ENCODE measurements at regions of chr2 and their contacts with region 1.

Region 1: DNA sequence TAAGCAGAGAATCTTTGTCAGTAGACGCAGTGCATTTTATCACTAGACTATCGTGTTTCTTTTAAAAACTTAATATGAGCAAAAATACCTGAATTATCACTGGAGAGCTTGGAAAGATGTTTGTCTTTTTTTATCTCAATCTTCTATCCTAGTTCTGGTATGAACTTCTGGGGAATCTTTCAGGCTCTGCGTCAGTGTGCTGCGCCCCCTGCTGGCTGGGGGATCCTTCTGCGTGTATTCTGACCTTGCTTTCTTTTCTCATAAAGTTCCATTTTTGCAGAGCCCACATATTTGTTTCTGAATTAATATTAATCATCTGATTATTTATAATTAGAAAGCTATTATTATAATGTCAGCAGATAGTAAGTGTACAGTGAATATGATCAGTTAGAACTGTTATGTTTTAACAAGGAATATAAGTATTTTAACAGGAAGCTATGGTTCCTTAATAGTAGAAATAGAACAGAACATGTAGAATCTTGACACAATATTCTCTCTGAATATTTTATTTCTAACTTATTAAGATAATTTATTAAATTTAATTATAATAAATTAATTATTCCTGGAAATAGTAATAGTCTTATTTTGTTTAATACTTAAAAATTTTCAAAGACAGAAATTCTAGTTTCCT is 945.0 kb upstream of the CRIM1 start:
- DNase-seq: no peak
- H3K4me3 ChIP-seq: no peak overlapping the region
- H3K27ac ChIP-seq: no peak overlapping the region
- H3K4me1 ChIP-seq: peaks cover 0 to 6% (median 0%) of the 10 kb centered on the region in 4 donors
- H3K27me3 ChIP-seq: no peaks in the 10 kb centered on the region
- CTCF ChIP-seq: peak; percentile 70 to 94 (median 92)
- EP300 ChIP-seq: no peak
- POLR2A ChIP-seq: no peak

Region 2: DNA sequence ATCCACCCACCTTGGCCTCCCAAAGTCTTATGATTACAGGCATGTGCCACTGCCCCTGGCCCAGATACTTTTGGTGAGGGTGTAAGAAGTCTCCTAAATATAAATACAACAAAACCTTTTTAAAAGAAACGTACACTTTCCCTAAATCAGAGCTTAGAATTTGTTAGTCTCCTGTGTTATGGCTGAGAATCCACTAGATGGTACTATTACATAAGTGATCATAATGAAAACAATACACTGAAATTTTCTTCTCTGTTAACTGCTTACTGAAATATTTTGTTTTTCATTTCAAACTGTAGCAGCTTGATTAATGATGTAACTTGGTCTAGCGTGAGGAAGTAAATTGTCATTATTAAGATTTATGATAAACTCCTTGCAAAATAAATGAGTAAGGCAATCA is 1736.6 kb before region 1 on chr2:
- intact Hi-C with region 1: loop called (anchors 10 kb)
- DNase-seq: no peak
- H3K4me3 ChIP-seq: no peak overlapping the region
- H3K27ac ChIP-seq: no peak overlapping the region
- H3K4me1 ChIP-seq: no peaks in the 10 kb centered on the region
- H3K27me3 ChIP-seq: no peaks in the 10 kb centered on the region
- CTCF ChIP-seq: peak; percentile 40 to 58 (median 47)
- EP300 ChIP-seq: no peak
- POLR2A ChIP-seq: no peak

Region 3: GRCh38 chr2:34096562-34097171 is 1313.9 kb before region 1 on chr2:
- intact Hi-C with region 1: loop called (anchors 5 kb)
- DNase-seq: no peak
- H3K4me3 ChIP-seq: no peak overlapping the region
- H3K27ac ChIP-seq: no peak overlapping the region
- H3K4me1 ChIP-seq: peaks cover 0 to 3% (median 0%) of the 10 kb centered on the region in 4 donors
- H3K27me3 ChIP-seq: no peaks in the 10 kb centered on the region
- CTCF ChIP-seq: peak; percentile 58 to 78 (median 77)
- EP300 ChIP-seq: no peak
- POLR2A ChIP-seq: no peak

Region 4: DNA sequence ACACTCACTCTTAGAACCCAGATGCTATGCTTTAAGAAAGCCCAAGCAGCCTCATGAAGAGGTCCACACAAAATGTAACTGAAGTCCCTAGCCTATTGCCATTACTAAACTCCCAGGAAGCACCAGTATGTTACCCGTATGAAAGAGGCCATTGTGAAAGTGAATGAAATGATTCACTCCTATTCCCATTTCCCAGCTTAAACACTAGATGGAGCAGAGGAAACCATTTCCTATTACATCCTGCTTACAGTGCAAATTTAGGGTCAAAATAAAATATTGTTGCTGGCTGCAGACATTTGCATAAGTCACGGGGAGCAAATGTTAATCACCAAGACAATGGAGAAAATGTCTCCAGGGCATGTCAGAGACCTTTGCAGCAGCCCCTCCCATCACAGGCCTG is 44.7 kb before region 1 on chr2:
- intact Hi-C with region 1: no loop called
- DNase-seq: no peak
- H3K4me3 ChIP-seq: no peak overlapping the region
- H3K27ac ChIP-seq: no peak overlapping the region
- H3K4me1 ChIP-seq: peaks cover 0 to 13% (median 6%) of the 10 kb centered on the region in 4 donors
- H3K27me3 ChIP-seq: no peaks in the 10 kb centered on the region
- CTCF ChIP-seq: no peak
- EP300 ChIP-seq: no peak
- POLR2A ChIP-seq: no peak

Measured in esophagus muscularis mucosa (tissue), 4 donors.